Right cardiac atrium (tissue), 5 donors: ENCODE measurements at regions of chr9 and their contacts with region 1.

Region 1: GRCh38 chr9:81045658-81046057 is 643.7 kb downstream of the TLE1 start:
- DNase-seq: no peak
- ATAC-seq: no peak
- H3K4me3 ChIP-seq: no peak overlapping the region
- H3K27ac ChIP-seq: no peak overlapping the region
- H3K4me1 ChIP-seq: no peaks in the 10 kb centered on the region
- H3K27me3 ChIP-seq: no peaks in the 10 kb centered on the region

Region 2: DNA sequence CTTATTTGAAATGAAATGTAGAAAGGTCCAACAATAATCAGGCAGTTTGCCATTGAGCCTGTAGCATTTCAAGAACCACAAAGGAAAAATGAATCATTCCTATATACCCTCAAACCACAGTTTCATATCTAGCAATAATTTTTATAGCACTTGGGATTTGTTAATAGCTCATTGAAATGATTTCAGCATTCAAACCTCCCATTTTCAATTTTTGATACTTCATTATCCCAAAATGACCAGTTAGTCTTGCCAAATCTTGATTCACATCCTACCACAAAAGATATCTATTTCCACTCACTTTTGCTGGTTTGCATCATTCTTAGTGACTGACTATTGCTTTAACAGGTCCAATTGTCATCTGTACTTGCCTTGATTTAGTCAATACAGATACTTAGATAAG is 146.4 kb before region 1 on chr9:
- intact Hi-C with region 1: loop called in 1 of 4 experiments (anchors 5 kb)
- DNase-seq: no peak
- ATAC-seq: no peak
- H3K4me3 ChIP-seq: no peak overlapping the region
- H3K27ac ChIP-seq: no peak overlapping the region
- H3K4me1 ChIP-seq: no peaks in the 10 kb centered on the region
- H3K27me3 ChIP-seq: no peaks in the 10 kb centered on the region

Region 3: GRCh38 chr9:81321046-81321504 is 275.4 kb after region 1 on chr9:
- intact Hi-C with region 1: no loop called
- DNase-seq: no peak
- ATAC-seq: no peak
- H3K4me3 ChIP-seq: no peak overlapping the region
- H3K27ac ChIP-seq: no peak overlapping the region
- H3K4me1 ChIP-seq: no peaks in the 10 kb centered on the region
- H3K27me3 ChIP-seq: no peaks in the 10 kb centered on the region